ENCODE measurements at regions of chr16 and their contacts with region 1.

Region 1: DNA sequence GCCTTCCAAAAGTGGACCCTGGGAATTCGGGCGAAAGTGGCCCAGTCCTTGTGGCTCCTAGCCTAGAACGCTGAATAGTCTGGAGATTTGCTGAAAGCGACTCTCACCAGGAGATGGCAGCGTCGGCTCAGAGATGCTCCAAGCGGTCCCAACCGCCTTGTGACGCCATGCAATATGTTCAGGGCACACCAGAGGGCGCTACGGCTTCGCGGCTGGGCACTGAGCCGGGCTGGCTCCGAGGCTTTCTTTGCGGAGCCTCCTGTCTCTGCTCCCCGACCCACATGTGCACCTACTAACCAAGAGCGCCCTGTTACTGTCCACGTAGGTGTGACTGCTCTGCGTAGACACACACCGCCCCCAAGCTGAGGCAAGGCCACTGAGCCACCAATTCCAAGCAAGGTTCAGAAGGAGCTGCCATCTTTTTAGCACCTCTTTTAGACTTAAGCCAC is 36.9 kb downstream of the SYCE1L start:
- DNase-seq: peak; percentile 70 to 93 (median 83)
- ATAC-seq: peak; percentile 97 to 100 (median 98)
- H3K4me3 ChIP-seq: peak overlapping the region; percentile 11 to 44
- H3K4me3 Mint-ChIP-seq: peak overlapping the region; percentile 50 to 61 (median 54)
- H3K27ac ChIP-seq: no peak overlapping the region
- H3K27ac Mint-ChIP-seq: no peak overlapping the region
- H3K4me1 ChIP-seq: peaks cover 2 to 7% of the 10 kb centered on the region in 2 experiments
- H3K4me1 Mint-ChIP-seq: peaks cover 4 to 6% (median 4%) of the 10 kb centered on the region in 3 donors
- H3K27me3 ChIP-seq: peaks cover 0 to 20% of the 10 kb centered on the region in 2 experiments
- H3K27me3 Mint-ChIP-seq: peaks cover 14 to 24% of the 10 kb centered on the region in 2 donors

Region 2: GRCh38 chr16:77250400-77250799 is 14.3 kb after region 1 on chr16:
- CTCF ChIA-PET with region 1: no interaction called
- POLR2A ChIA-PET with region 1: no interaction called
- DNase-seq: no peak
- ATAC-seq: no peak
- H3K4me3 ChIP-seq: no peak overlapping the region
- H3K4me3 Mint-ChIP-seq: no peak overlapping the region
- H3K27ac ChIP-seq: no peak overlapping the region
- H3K27ac Mint-ChIP-seq: no peak overlapping the region
- H3K4me1 ChIP-seq: no peaks in the 10 kb centered on the region
- H3K4me1 Mint-ChIP-seq: no peaks in the 10 kb centered on the region
- H3K27me3 ChIP-seq: no peaks in the 10 kb centered on the region
- H3K27me3 Mint-ChIP-seq: peaks cover 4 to 8% of the 10 kb centered on the region in 2 donors

Region 3: GRCh38 chr16:77584205-77584859 is 348.2 kb after region 1 on chr16:
- CTCF ChIA-PET with region 1: interaction called, 21 to 46 read pairs
- POLR2A ChIA-PET with region 1: no interaction called
- DNase-seq: peak in 26 of 35 experiments; percentile 7 to 63 (median 25)
- ATAC-seq: peak in 3 of 4 experiments; percentile 41 to 48 (median 48)
- H3K4me3 ChIP-seq: no peak overlapping the region
- H3K4me3 Mint-ChIP-seq: no peak overlapping the region
- H3K27ac ChIP-seq: no peak overlapping the region
- H3K27ac Mint-ChIP-seq: no peak overlapping the region
- H3K4me1 ChIP-seq: no peaks in the 10 kb centered on the region
- H3K4me1 Mint-ChIP-seq: no peaks in the 10 kb centered on the region
- H3K27me3 ChIP-seq: peaks cover 0 to 17% of the 10 kb centered on the region in 2 experiments
- H3K27me3 Mint-ChIP-seq: peaks cover 18 to 31% of the 10 kb centered on the region in 2 donors